T-cell (primary cell): ENCODE measurements at regions of chr5 and their contacts with region 1.

Region 1: DNA sequence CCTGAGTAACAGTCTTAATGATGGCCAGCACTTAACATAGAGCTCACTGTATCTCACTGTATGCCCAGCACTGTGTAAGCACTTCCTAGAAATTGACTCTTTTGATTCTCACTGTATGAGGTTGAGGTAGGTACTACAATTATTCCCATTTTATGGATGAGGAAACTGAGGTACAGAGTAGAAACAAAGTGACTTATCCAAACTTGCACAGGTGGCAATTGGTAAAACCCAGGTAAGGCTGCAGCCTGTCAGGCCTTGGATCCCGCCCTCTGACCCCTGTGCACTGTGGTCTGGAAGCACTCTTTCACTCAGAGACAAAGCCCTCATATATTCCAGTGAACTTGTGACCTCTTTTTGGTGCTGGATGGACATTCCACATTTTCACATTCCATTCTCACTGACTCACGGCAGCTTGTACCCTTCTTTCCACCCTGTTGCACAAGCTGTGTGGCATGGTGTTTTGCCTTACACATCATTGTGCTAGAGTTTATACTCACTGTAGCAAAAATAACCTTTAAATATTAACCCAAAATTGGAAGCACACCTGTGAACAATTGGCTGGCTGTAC is 21.7 kb downstream of the ANKRD55 start:
- DNase-seq: no peak
- ATAC-seq: no peak
- H3K4me3 ChIP-seq: no peak overlapping the region
- H3K4me3 Mint-ChIP-seq: no peak overlapping the region
- H3K27ac ChIP-seq: no peak overlapping the region
- H3K27ac Mint-ChIP-seq: no peak overlapping the region
- H3K4me1 ChIP-seq: no peaks in the 10 kb centered on the region
- H3K4me1 Mint-ChIP-seq: no peaks in the 10 kb centered on the region
- H3K27me3 ChIP-seq: no peaks in the 10 kb centered on the region
- H3K27me3 Mint-ChIP-seq: no peaks in the 10 kb centered on the region

Region 2: DNA sequence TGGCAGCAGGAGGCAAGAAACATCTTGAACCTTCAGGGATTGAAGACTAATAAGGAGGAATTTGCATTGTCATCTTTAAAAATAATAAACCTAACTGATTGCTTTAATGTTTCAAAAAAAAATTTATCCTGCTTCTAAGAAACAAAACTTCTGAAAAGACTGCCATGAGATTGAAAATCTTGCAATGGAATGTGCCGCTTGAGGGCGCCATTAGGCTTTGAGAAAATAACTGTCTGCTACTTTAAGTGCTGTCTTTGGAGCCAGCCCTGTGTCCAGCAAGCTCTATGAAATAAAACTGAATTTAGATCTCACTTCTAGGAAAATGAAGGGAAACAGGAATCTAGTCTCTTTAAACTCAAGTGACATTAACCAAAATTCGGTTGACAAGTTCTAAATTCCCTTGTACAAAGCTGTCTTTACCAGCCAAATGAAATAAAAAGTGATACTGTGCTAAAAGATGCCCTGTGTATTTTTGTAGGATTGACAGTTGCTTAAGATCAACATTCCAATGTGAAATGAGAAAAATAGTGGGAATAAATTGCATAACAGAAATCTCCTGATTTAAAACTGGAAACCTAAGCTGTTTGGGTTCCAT is 1305.3 kb before region 1 on chr5:
- CTCF ChIA-PET with region 1: interaction called in 1 of 2 experiments, 10 read pairs
- POLR2A ChIA-PET with region 1: no interaction called
- DNase-seq: peak in 33 of 35 experiments; percentile 10 to 79 (median 57)
- ATAC-seq: peak in 2 of 4 experiments; percentile 38 to 41
- H3K4me3 ChIP-seq: no peak overlapping the region
- H3K4me3 Mint-ChIP-seq: no peak overlapping the region
- H3K27ac ChIP-seq: no peak overlapping the region
- H3K27ac Mint-ChIP-seq: no peak overlapping the region
- H3K4me1 ChIP-seq: peaks cover 6 to 11% of the 10 kb centered on the region in 2 experiments
- H3K4me1 Mint-ChIP-seq: peaks cover 10 to 11% (median 11%) of the 10 kb centered on the region in 3 donors
- H3K27me3 ChIP-seq: no peaks in the 10 kb centered on the region
- H3K27me3 Mint-ChIP-seq: peaks cover 10 to 12% of the 10 kb centered on the region in 2 donors

Region 3: DNA sequence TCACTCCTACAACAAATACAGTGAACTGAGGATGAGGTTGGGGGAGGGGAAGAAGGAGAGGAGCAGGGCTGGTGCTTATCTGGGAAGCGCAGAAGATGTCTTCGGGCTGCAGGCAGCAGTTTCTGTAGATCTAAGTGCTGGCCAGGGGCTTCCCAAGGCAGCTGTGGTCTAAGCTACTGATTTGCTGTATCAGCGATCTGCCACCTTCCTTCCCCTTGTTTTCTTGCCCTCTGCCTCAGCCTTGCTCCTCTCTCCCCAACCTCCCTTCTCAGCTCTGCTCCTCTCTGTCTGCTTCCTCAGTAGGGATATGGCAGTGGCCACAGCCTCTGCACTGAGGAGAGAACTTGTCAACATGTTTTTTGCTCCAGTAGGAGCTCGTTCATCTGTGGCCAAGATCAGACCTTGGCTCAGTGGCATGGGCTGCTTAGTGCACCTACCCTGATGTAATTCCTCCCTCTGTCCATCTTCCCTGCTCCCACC is 173.8 kb before region 1 on chr5:
- CTCF ChIA-PET with region 1: no interaction called
- POLR2A ChIA-PET with region 1: interaction called in 1 of 2 experiments, 12 read pairs
- DNase-seq: no peak
- ATAC-seq: no peak
- H3K4me3 ChIP-seq: no peak overlapping the region
- H3K4me3 Mint-ChIP-seq: peak overlapping the region in 1 of 3 donors; percentile 47
- H3K27ac ChIP-seq: no peak overlapping the region
- H3K27ac Mint-ChIP-seq: peak overlapping the region in 1 of 2 donors; percentile 46
- H3K4me1 ChIP-seq: peaks cover 5 to 6% of the 10 kb centered on the region in 2 experiments
- H3K4me1 Mint-ChIP-seq: peaks cover 10 to 28% (median 17%) of the 10 kb centered on the region in 3 donors
- H3K27me3 ChIP-seq: no peaks in the 10 kb centered on the region
- H3K27me3 Mint-ChIP-seq: no peaks in the 10 kb centered on the region